K562 (cell line): ENCODE measurements at regions of chr6 and their contacts with region 1.

Region 1: GRCh38 chr6:158694913-158695312 is 45.1 kb downstream of the SYTL3 start:
- DNase-seq: no peak
- ATAC-seq: no peak
- H3K4me3 ChIP-seq: no peak overlapping the region
- H3K27ac ChIP-seq: no peak overlapping the region
- H3K4me1 ChIP-seq: no peaks in the 10 kb centered on the region
- H3K27me3 ChIP-seq: peaks cover 11 to 29% of the 10 kb centered on the region in 2 experiments; a peak in 4 of 5 replicates
- CTCF ChIP-seq: no peak
- EP300 ChIP-seq: no peak
- POLR2A ChIP-seq: no peak
- RAD21 ChIP-seq: no peak

Region 2: DNA sequence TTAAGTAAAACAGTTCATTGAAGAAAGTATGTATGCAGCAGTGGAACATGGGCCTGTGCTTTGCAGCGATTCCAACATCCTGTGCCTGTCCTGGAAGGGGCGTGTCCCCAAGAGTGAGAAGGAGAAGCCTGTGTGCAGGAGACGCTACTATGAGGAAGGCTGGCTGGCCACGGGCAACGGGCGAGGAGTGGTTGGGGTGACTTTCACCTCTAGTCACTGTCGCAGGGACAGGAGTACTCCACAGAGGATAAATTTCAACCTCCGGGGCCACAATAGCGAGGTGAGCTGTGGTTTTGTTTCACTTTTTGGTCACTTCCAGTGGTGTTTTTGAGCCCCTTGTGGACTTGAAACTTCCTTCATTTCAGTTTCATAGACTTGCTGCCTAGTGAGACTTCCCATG is 380.9 kb before region 1 on chr6:
- CTCF ChIA-PET with region 1: no interaction called
- POLR2A ChIA-PET with region 1: no interaction called
- in situ Hi-C with region 1: no loop called
- intact Hi-C with region 1: no loop called
- DNase-seq: no peak
- ATAC-seq: peak; percentile 53; the same call in 2 of the 3 replicates
- H3K4me3 ChIP-seq: no peak overlapping the region
- H3K27ac ChIP-seq: no peak overlapping the region
- H3K4me1 ChIP-seq: no peaks in the 10 kb centered on the region
- H3K27me3 ChIP-seq: no peaks in the 10 kb centered on the region
- CTCF ChIP-seq: no peak
- EP300 ChIP-seq: no peak
- POLR2A ChIP-seq: no peak
- RAD21 ChIP-seq: no peak

Region 3: GRCh38 chr6:158500016-158500735 is 194.7 kb before region 1 on chr6:
- CTCF ChIA-PET with region 1: no interaction called
- POLR2A ChIA-PET with region 1: no interaction called
- in situ Hi-C with region 1: no loop called
- intact Hi-C with region 1: no loop called
- DNase-seq: no peak
- ATAC-seq: no peak
- H3K4me3 ChIP-seq: no peak overlapping the region
- H3K27ac ChIP-seq: no peak overlapping the region
- H3K4me1 ChIP-seq: peaks cover 0 to 4% of the 10 kb centered on the region in 2 experiments; a peak in 2 of 5 replicates
- H3K27me3 ChIP-seq: no peaks in the 10 kb centered on the region
- CTCF ChIP-seq: no peak
- EP300 ChIP-seq: no peak
- POLR2A ChIP-seq: no peak
- RAD21 ChIP-seq: no peak

Region 4: GRCh38 chr6:158518191-158519127 is 176.5 kb before region 1 on chr6:
- CTCF ChIA-PET with region 1: no interaction called
- POLR2A ChIA-PET with region 1: no interaction called
- in situ Hi-C with region 1: no loop called
- intact Hi-C with region 1: loop called (anchors 5 kb)
- DNase-seq: peak; percentile 57 to 73 (median 62)
- ATAC-seq: peak; percentile 91
- H3K4me3 ChIP-seq: peak overlapping the region; percentile 15
- H3K27ac ChIP-seq: no peak overlapping the region
- H3K4me1 ChIP-seq: peaks cover 0 to 3% of the 10 kb centered on the region in 2 experiments; a peak in 2 of 5 replicates
- H3K27me3 ChIP-seq: peaks cover 52 to 78% of the 10 kb centered on the region in 2 experiments
- CTCF ChIP-seq: peak; percentile 72 to 76 (median 75)
- EP300 ChIP-seq: no peak
- POLR2A ChIP-seq: no peak
- RAD21 ChIP-seq: peak; percentile 63 to 75